ENCODE measurements at regions of chr2 and their contacts with region 1.

Region 1: DNA sequence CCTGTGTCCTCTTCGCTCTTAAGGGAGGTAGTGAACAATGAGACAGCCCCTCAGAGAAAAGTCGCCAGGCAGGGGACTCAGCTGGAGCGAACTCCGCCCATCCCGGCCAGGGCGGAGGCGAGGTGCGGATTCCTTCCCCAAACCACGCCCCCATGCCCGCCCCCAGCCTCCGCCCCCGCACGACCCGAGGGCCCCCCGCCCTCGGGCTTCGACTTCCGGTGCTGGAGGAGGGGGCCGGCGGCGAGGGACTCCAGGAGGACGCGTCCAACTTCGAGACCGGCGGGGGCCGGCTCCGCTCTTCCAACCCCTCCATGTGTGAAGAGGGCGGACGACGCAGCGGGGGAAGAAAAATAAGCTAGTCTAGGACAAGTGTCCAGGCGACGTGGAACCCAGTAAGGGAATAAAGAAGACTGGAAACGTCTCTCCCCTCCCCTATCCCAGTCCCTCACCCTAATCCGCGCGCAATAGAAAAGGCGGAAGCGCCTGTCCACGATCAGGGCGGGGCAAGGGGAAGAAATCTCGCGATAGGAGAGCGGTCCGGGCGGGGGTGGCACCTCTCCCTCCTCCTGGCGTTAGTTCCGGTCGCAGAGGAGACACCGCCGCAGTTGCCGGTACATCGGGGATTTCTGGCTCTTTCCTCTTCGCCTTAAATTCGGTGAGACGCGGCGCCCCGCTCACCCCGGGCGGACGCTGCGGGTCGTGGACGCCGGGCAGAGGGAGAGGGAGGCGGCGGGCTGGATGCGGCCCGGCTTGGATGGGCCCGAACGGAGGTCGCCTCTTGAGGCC is at the start of gene BZW1:
- DNase-seq: peak; percentile 93 to 98
- ATAC-seq: peak; percentile 78 to 92 (median 78)
- H3K4me3 ChIP-seq: peak within 1 kb of the TSS; percentile 61
- H3K4me3 Mint-ChIP-seq: peak within 1 kb of the TSS; percentile 95
- H3K27ac ChIP-seq: peak within 1 kb of the TSS; percentile 99
- H3K27ac Mint-ChIP-seq: peak within 1 kb of the TSS; percentile 93 to 98
- H3K4me1 ChIP-seq: peaks cover 18% of the 10 kb centered on the region
- H3K4me1 Mint-ChIP-seq: peaks cover 53 to 56% of the 10 kb centered on the region in 2 donors
- H3K27me3 ChIP-seq: no peaks in the 10 kb centered on the region
- H3K27me3 Mint-ChIP-seq: no peaks in the 10 kb centered on the region
- CTCF ChIP-seq: no peak
- total RNA-seq, gene BZW1: 393 to 417 (median 411) TPM

Region 2: GRCh38 chr2:200483729-200484198 is 327.8 kb before region 1 on chr2:
- intact Hi-C with region 1: no loop called
- DNase-seq: peak in 1 of 2 donors; percentile 15
- ATAC-seq: no peak
- H3K4me3 ChIP-seq: no peak overlapping the region
- H3K4me3 Mint-ChIP-seq: no peak overlapping the region
- H3K27ac ChIP-seq: no peak overlapping the region
- H3K27ac Mint-ChIP-seq: no peak overlapping the region
- H3K4me1 ChIP-seq: no peaks in the 10 kb centered on the region
- H3K4me1 Mint-ChIP-seq: no peaks in the 10 kb centered on the region
- H3K27me3 ChIP-seq: no peaks in the 10 kb centered on the region
- H3K27me3 Mint-ChIP-seq: no peaks in the 10 kb centered on the region
- CTCF ChIP-seq: no peak

Region 3: DNA sequence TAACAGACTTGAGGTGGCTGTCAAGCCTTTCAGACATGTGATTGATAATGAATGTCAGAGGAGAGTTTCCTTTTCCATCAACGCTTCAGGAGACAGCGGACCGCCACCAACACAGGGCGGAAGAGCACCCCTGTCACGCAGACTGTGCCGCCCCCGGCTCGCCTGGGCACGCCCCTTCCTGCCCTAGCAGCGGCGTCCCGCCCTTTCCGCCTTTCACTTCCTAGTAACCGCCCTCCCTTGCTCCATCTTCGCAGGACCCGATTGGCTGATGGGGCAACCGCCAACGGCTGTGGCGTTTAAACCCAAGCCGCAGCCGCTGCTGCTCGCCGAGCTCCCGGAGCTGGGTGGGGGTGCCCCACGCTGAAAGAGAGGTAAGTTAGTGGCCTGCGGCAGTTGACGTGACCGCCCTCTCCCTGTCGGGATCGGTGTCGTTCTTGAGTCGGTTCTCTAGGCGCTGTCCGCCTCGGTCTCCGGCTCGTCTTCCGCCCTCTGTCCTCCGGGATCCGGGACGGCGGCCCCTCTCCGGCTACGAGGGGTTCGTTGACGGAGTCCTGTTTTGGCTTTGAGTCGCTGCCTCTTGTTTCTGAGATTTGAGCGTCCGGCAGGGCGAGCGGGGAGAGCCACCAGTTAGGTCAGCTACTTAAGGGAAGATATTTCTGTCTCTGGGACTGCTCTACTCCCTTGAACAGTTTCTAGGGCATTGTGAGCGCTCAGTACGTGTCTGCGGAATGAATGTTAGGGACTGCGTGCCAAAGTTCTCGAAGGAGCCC is 285.5 kb before region 1 on chr2 and contains the start of gene SGO2:
- intact Hi-C with region 1: loop called (anchors 1 kb)
- DNase-seq: peak; percentile 92 to 97
- ATAC-seq: peak; percentile 99 to 100 (median 99)
- H3K4me3 ChIP-seq: peak within 1 kb of the TSS; percentile 94
- H3K4me3 Mint-ChIP-seq: peak within 1 kb of the TSS; percentile 92
- H3K27ac ChIP-seq: peak within 1 kb of the TSS; percentile 70
- H3K27ac Mint-ChIP-seq: peak within 1 kb of the TSS; percentile 85
- H3K4me1 ChIP-seq: peaks cover 7% of the 10 kb centered on the region
- H3K4me1 Mint-ChIP-seq: peaks cover 9 to 10% of the 10 kb centered on the region in 2 donors
- H3K27me3 ChIP-seq: no peaks in the 10 kb centered on the region
- H3K27me3 Mint-ChIP-seq: peaks cover 2 to 7% of the 10 kb centered on the region in 2 donors
- CTCF ChIP-seq: no peak
- total RNA-seq, gene SGO2: 2.3 to 5.4 (median 3.1) TPM

Region 4: DNA sequence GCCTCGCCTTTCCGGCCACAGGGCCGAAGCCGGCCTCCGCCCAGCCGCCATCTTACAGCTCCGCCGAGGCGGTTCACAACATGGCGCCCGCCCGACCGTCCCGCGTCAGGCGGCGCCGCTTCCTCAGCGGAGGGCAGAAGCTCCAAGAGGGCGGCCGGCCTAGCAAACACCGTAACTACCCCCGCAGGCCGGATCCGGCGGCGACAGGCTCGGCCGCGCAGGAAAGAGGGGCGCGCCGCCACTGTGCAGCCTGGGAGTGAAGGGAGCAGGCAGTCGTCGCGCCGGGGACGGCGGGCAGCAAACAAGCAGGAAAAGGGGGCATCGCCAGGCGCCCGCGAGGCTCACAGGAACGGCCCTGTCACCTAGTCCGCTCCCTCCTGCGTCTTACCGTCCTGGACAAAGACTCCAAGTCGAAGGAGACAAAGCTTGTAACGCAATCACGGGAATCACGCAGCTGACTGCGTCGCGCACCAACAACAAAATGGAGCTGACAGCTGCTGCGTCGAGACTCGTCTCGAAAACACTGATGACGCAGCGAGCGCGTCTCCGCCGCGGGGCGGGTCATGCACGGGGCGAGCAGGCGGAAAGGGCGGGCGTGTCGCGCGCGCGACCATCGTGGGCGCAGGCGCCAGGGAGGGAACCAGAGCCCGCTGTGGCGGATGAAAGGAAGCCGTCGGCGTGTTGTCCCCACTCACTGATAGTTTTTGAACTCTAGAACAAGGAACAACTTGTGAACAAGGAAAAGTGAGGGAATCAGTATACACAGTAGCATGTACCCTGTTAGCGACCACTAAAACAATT is 52.8 kb after region 1 on chr2 and contains the start of gene CLK1:
- intact Hi-C with region 1: loop called (anchors 1 kb)
- DNase-seq: peak; percentile 93 to 98
- ATAC-seq: peak; percentile 76 to 92 (median 82)
- H3K4me3 ChIP-seq: peak within 1 kb of the TSS; percentile 95
- H3K4me3 Mint-ChIP-seq: peak within 1 kb of the TSS; percentile 93
- H3K27ac ChIP-seq: peak within 1 kb of the TSS; percentile 99
- H3K27ac Mint-ChIP-seq: peak within 1 kb of the TSS; percentile 92 to 99
- H3K4me1 ChIP-seq: peaks cover 23% of the 10 kb centered on the region
- H3K4me1 Mint-ChIP-seq: peaks cover 45 to 58% of the 10 kb centered on the region in 2 donors
- H3K27me3 ChIP-seq: no peaks in the 10 kb centered on the region
- H3K27me3 Mint-ChIP-seq: no peaks in the 10 kb centered on the region
- CTCF ChIP-seq: no peak
- total RNA-seq, gene CLK1: 975 to 1,296 (median 1,070) TPM

Region 5: GRCh38 chr2:201118121-201118960 is 306.8 kb after region 1 on chr2:
- intact Hi-C with region 1: loop called (anchors 5 kb)
- DNase-seq: peak; percentile 87 to 93
- ATAC-seq: peak; percentile 46 to 61 (median 54)
- H3K4me3 ChIP-seq: peak overlapping the region; percentile 90
- H3K4me3 Mint-ChIP-seq: peak overlapping the region; percentile 95
- H3K27ac ChIP-seq: peak overlapping the region; percentile 93
- H3K27ac Mint-ChIP-seq: peak overlapping the region; percentile 93 to 100
- H3K4me1 ChIP-seq: peaks cover 50% of the 10 kb centered on the region
- H3K4me1 Mint-ChIP-seq: peaks cover 79 to 82% of the 10 kb centered on the region in 2 donors
- H3K27me3 ChIP-seq: no peaks in the 10 kb centered on the region
- H3K27me3 Mint-ChIP-seq: no peaks in the 10 kb centered on the region
- CTCF ChIP-seq: peak; percentile 40

Region 6: DNA sequence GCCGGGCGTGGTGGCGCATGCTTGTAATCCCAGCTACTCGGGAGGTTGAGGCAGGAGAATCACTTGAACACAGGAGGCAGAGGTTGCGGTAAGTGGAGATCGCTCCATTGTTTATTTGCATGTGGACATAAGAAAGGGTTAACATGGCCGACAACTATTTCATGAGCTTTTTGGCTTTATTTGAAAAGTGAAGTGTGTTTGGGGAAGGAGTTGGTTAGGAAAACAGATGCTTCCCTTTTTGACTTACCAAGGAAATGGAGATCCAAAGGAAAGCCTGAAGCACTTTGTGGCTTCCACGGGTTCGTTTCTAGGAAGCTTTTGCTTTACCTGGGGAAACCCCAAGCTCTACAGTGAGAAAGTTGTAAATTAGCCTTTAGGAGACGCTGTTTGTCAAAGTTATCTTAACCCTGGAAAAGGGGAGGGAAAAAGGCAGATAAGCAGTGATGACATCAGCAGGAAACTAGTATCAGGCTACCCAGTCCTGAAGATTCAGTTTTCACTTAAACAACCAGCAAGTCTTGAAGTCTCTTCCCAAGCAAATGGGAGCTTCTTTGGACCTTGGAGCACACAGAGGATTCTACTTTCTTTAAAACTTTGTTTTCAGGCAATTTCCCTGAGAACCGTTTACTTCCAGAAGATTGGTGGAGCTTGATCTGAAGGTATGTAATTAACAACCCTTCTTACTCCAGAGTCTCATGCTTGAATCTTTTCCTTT is 371.3 kb after region 1 on chr2 and contains the start of gene CASP10:
- intact Hi-C with region 1: loop called (anchors 5 kb)
- DNase-seq: peak in 1 of 2 donors; percentile 87
- ATAC-seq: peak; percentile 75 to 83 (median 79)
- H3K4me3 ChIP-seq: peak within 1 kb of the TSS; percentile 59
- H3K4me3 Mint-ChIP-seq: peak within 1 kb of the TSS; percentile 97
- H3K27ac ChIP-seq: peak within 1 kb of the TSS; percentile 72
- H3K27ac Mint-ChIP-seq: peak within 1 kb of the TSS; percentile 97 to 98
- H3K4me1 ChIP-seq: peaks cover 28% of the 10 kb centered on the region
- H3K4me1 Mint-ChIP-seq: peaks cover 51 to 52% of the 10 kb centered on the region in 2 donors
- H3K27me3 ChIP-seq: no peaks in the 10 kb centered on the region
- H3K27me3 Mint-ChIP-seq: no peaks in the 10 kb centered on the region
- CTCF ChIP-seq: peak; percentile 57
- total RNA-seq, gene CASP10: 67.4 to 101 (median 75.3) TPM

Region 7: GRCh38 chr2:201257956-201258665 is 446.6 kb after region 1 on chr2:
- intact Hi-C with region 1: loop called (anchors 5 kb)
- DNase-seq: peak; percentile 75 to 97
- ATAC-seq: peak; percentile 53 to 83 (median 73)
- H3K4me3 ChIP-seq: peak overlapping the region; percentile 42
- H3K4me3 Mint-ChIP-seq: peak overlapping the region; percentile 94
- H3K27ac ChIP-seq: peak overlapping the region; percentile 98
- H3K27ac Mint-ChIP-seq: peak overlapping the region; percentile 100
- H3K4me1 ChIP-seq: peaks cover 71% of the 10 kb centered on the region
- H3K4me1 Mint-ChIP-seq: peaks cover 66 to 77% of the 10 kb centered on the region in 2 donors
- H3K27me3 ChIP-seq: no peaks in the 10 kb centered on the region
- H3K27me3 Mint-ChIP-seq: no peaks in the 10 kb centered on the region
- CTCF ChIP-seq: no peak

Measured in natural killer cell (primary cell).